Astrocyte of the cerebellum (primary cell): ENCODE measurements at regions of chr10 and their contacts with region 1.

Region 1: DNA sequence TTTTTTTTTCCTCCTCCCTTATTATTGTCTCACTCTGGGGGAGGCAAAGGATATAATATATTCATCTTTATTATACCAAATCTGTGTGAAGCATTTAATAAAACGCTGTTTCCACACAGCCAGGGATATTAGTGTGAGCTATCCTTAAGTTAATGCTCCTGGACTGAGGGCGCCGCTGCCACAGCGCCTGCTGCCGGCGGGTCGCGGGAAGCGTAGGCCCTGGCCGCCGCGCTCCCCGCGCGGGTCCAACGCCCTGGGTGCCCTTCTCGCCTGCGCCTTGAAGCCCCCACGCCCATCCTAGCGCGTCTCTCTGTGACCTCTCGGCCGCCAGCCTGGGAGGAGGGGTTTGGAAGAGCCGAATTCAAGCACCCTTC is 9.5 kb upstream of the LBX1 start:
- DNase-seq: no peak
- H3K4me3 ChIP-seq: no peak overlapping the region
- CTCF ChIP-seq: peak; percentile 82

Region 2: GRCh38 chr10:101207026-101207425 is 31.7 kb before region 1 on chr10:
- in situ Hi-C with region 1: loop called (anchors 5 kb)
- DNase-seq: no peak
- H3K4me3 ChIP-seq: no peak overlapping the region
- CTCF ChIP-seq: no peak

Region 3: GRCh38 chr10:101285519-101286070 is 46.9 kb after region 1 on chr10:
- in situ Hi-C with region 1: no loop called
- DNase-seq: no peak
- H3K4me3 ChIP-seq: no peak overlapping the region
- CTCF ChIP-seq: no peak

Region 4: GRCh38 chr10:101297901-101298486 is 59.3 kb after region 1 on chr10:
- in situ Hi-C with region 1: no loop called
- DNase-seq: peak; percentile 13
- H3K4me3 ChIP-seq: no peak overlapping the region
- CTCF ChIP-seq: peak; percentile 80